Ovary (tissue), 10 donors: ENCODE measurements at regions of chr22 and their contacts with region 1.

Region 1: GRCh38 chr22:31734512-31734911 is 15.4 kb downstream of the PRR14L start:
- DNase-seq: no peak
- H3K4me3 ChIP-seq: no peak overlapping the region
- H3K27ac ChIP-seq: no peak overlapping the region
- H3K4me1 ChIP-seq: no peaks in the 10 kb centered on the region
- H3K27me3 ChIP-seq: no peaks in the 10 kb centered on the region
- CTCF ChIP-seq: no peak
- EP300 ChIP-seq: no peak
- POLR2A ChIP-seq: no peak

Region 2: GRCh38 chr22:32005453-32005852 is 270.9 kb after region 1 on chr22:
- intact Hi-C with region 1: no loop called
- DNase-seq: no peak
- H3K4me3 ChIP-seq: no peak overlapping the region
- H3K27ac ChIP-seq: no peak overlapping the region
- H3K4me1 ChIP-seq: no peaks in the 10 kb centered on the region
- H3K27me3 ChIP-seq: no peaks in the 10 kb centered on the region
- CTCF ChIP-seq: no peak
- EP300 ChIP-seq: no peak
- POLR2A ChIP-seq: no peak

Region 3: GRCh38 chr22:32474635-32475467 is 740.3 kb after region 1 on chr22 and contains the start of gene FBXO7:
- intact Hi-C with region 1: loop called in 1 of 4 experiments (anchors 10 kb)
- DNase-seq: peak; percentile 91 to 96 (median 93)
- H3K4me3 ChIP-seq: peak within 1 kb of the TSS; percentile 59
- H3K27ac ChIP-seq: peak within 1 kb of the TSS; percentile 92 to 97
- H3K4me1 ChIP-seq: peaks cover 7% of the 10 kb centered on the region
- H3K27me3 ChIP-seq: no peaks in the 10 kb centered on the region
- CTCF ChIP-seq: peak in 2 of 3 donors; percentile 66 to 67
- EP300 ChIP-seq: no peak
- POLR2A ChIP-seq: peak; percentile 73
- total RNA-seq, gene FBXO7: 70.7 to 94.1 (median 85.6) TPM